ENCODE measurements at regions of chr1 and their contacts with region 1.

Region 1: GRCh38 chr1:89632657-89633247 is at the start of gene LRRC8C:
- DNase-seq: peak; percentile 75 to 95 (median 86)
- ATAC-seq: peak; percentile 77
- H3K4me3 ChIP-seq: peak within 1 kb of the TSS; percentile 95
- H3K4me3 Mint-ChIP-seq: peak within 1 kb of the TSS; percentile 99
- H3K27ac ChIP-seq: peak within 1 kb of the TSS; percentile 92 to 94
- H3K27ac Mint-ChIP-seq: peak within 1 kb of the TSS; percentile 98
- H3K4me1 ChIP-seq: peaks cover 41% of the 10 kb centered on the region
- H3K4me1 Mint-ChIP-seq: peaks cover 89% of the 10 kb centered on the region
- H3K27me3 ChIP-seq: no peaks in the 10 kb centered on the region
- H3K27me3 Mint-ChIP-seq: no peaks in the 10 kb centered on the region
- CTCF ChIP-seq: no peak
- total RNA-seq, gene LRRC8C: 28.4 to 30.2 TPM

Region 2: DNA sequence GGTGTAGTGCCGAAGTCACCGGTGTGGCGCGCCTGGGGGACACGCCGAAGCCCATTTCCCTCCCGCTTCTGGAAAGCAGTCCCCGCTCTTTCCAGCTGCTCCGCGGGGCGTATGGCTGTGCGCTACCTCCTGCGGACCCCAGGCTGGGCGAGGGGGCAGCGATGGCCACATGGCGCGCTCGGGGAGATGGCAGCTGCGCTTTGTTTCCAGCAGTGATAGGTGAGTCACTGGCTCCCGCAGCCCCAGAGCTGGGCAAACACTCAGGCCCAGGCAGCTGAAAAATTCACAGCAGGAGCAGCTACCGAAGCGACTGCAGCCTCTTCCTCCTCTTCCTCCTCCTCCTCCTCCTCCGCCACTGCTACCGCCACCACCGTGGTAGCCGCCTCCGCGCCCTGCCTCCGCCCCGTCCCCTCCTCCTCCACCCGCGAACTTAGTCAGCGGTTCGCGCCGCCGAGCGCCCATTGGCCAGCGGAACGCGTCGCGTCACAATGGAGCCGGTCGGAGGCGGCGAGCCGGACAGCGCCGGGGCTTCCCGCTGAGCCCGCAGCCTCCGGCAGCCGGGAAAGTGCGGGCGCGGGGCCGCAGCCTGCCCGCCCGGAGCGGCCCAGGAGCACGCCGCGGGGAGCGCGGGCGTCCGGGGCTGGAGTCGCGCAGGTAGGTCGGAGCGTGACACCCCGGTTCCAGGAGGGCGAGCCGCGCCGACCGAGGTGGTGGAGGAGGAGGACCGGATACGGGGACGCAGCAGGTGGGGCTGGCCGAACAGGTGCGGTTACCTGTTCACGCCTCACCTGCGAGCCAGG is 108.2 kb before region 1 on chr1 and contains the start of gene LRRC8B:
- CTCF ChIA-PET with region 1: no interaction called
- POLR2A ChIA-PET with region 1: interaction called, 17 read pairs
- intact Hi-C with region 1: no loop called
- DNase-seq: peak; percentile 74 to 95 (median 86)
- ATAC-seq: peak; percentile 79
- H3K4me3 ChIP-seq: peak within 1 kb of the TSS; percentile 97
- H3K4me3 Mint-ChIP-seq: no peak within 1 kb of the TSS
- H3K27ac ChIP-seq: peak within 1 kb of the TSS; percentile 90 to 91
- H3K27ac Mint-ChIP-seq: no peak within 1 kb of the TSS
- H3K4me1 ChIP-seq: peaks cover 23% of the 10 kb centered on the region
- H3K4me1 Mint-ChIP-seq: peaks cover 18% of the 10 kb centered on the region
- H3K27me3 ChIP-seq: no peaks in the 10 kb centered on the region
- H3K27me3 Mint-ChIP-seq: no peaks in the 10 kb centered on the region
- CTCF ChIP-seq: no peak
- total RNA-seq, gene LRRC8B: 15.4 to 16.8 TPM

Region 3: GRCh38 chr1:89566761-89567174 is 66.0 kb before region 1 on chr1:
- CTCF ChIA-PET with region 1: no interaction called
- POLR2A ChIA-PET with region 1: no interaction called
- intact Hi-C with region 1: no loop called
- DNase-seq: no peak
- ATAC-seq: no peak
- H3K4me3 ChIP-seq: no peak overlapping the region
- H3K4me3 Mint-ChIP-seq: no peak overlapping the region
- H3K27ac ChIP-seq: no peak overlapping the region
- H3K27ac Mint-ChIP-seq: no peak overlapping the region
- H3K4me1 ChIP-seq: no peaks in the 10 kb centered on the region
- H3K4me1 Mint-ChIP-seq: peaks cover 60% of the 10 kb centered on the region
- H3K27me3 ChIP-seq: no peaks in the 10 kb centered on the region
- H3K27me3 Mint-ChIP-seq: no peaks in the 10 kb centered on the region
- CTCF ChIP-seq: no peak

Region 4: GRCh38 chr1:89615676-89616598 is 16.8 kb before region 1 on chr1:
- CTCF ChIA-PET with region 1: interaction called, 84 read pairs
- POLR2A ChIA-PET with region 1: interaction called, 683 read pairs
- intact Hi-C with region 1: no loop called
- DNase-seq: peak in 3 of 14 experiments; percentile 48 to 66 (median 56)
- ATAC-seq: no peak
- H3K4me3 ChIP-seq: no peak overlapping the region
- H3K4me3 Mint-ChIP-seq: no peak overlapping the region
- H3K27ac ChIP-seq: no peak overlapping the region
- H3K27ac Mint-ChIP-seq: peak overlapping the region; percentile 99
- H3K4me1 ChIP-seq: peaks cover 42% of the 10 kb centered on the region
- H3K4me1 Mint-ChIP-seq: peaks cover 90% of the 10 kb centered on the region
- H3K27me3 ChIP-seq: no peaks in the 10 kb centered on the region
- H3K27me3 Mint-ChIP-seq: no peaks in the 10 kb centered on the region
- CTCF ChIP-seq: peak; percentile 17

Region 5: DNA sequence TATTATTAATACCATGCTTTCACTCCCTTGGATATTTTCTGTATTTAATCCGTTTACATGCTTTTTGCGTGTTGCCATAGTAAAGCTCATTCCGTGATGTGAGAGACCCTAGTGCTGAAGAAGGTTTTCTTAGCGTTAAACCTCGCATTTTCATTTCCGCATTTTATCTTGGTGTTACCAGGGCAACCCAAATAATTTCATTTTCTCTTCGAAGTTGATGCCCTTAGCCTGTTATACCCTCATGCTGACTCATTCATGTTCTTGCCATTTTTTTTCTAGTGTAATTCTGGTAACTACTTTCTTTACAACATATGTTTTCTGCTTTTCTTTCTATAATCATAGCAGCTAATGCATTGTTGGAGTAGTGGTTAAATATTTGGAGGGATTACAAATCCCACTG is 37.4 kb after region 1 on chr1:
- CTCF ChIA-PET with region 1: interaction called, 7 read pairs
- POLR2A ChIA-PET with region 1: interaction called, 6 read pairs
- intact Hi-C with region 1: loop called in 1 of 2 experiments (anchors 5 kb)
- DNase-seq: peak in 3 of 14 experiments; percentile 79 to 84 (median 81)
- ATAC-seq: peak; percentile 86
- H3K4me3 ChIP-seq: no peak overlapping the region
- H3K4me3 Mint-ChIP-seq: peak overlapping the region; percentile 62
- H3K27ac ChIP-seq: no peak overlapping the region
- H3K27ac Mint-ChIP-seq: peak overlapping the region; percentile 45
- H3K4me1 ChIP-seq: peaks cover 39% of the 10 kb centered on the region
- H3K4me1 Mint-ChIP-seq: peaks cover 98% of the 10 kb centered on the region
- H3K27me3 ChIP-seq: no peaks in the 10 kb centered on the region
- H3K27me3 Mint-ChIP-seq: no peaks in the 10 kb centered on the region
- CTCF ChIP-seq: no peak

Region 6: DNA sequence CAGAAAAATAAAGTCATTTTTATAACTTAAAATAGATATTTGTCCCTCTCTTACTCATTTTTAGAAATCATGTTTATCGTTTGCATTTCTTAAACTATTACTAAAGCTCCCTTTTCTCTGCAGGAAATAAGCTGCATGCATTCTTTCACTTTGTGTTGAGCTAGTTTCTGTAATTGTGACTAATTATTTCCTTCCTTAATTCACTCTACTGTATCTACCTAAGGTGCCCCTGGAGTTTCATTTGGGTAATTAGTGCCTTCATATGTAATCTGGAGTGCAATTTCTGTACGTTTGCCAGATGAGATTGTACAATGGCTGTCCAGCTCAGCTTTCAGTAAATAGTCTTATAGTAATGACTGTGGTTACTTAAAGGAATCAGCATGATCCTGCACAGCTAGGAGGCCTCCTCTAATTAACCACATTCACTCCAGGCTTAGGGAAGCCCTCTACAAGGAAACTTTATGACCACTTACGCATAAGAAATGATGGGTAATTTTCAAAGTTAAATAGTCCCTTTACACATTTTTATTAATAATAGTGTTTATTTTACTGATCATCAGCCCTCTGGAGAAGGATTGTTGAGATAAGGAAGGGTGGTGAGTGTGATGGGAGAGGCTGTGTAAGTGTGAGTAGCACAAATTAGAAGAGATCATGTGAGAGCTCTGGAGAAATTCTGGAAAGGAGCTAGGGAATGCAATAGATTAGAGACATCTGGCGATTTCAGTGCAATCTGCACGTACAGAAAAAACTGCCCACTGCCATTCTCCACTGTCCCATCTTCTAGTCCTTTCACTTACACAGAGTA is 87.0 kb after region 1 on chr1:
- CTCF ChIA-PET with region 1: interaction called, 6 read pairs
- POLR2A ChIA-PET with region 1: interaction called, 11 read pairs
- intact Hi-C with region 1: no loop called
- DNase-seq: peak in 3 of 14 experiments; percentile 59 to 80 (median 60)
- ATAC-seq: peak; percentile 80
- H3K4me3 ChIP-seq: no peak overlapping the region
- H3K4me3 Mint-ChIP-seq: peak overlapping the region; percentile 64
- H3K27ac ChIP-seq: peak overlapping the region in 1 of 2 donors; percentile 25
- H3K27ac Mint-ChIP-seq: peak overlapping the region; percentile 72
- H3K4me1 ChIP-seq: peaks cover 19% of the 10 kb centered on the region
- H3K4me1 Mint-ChIP-seq: peaks cover 78% of the 10 kb centered on the region
- H3K27me3 ChIP-seq: no peaks in the 10 kb centered on the region
- H3K27me3 Mint-ChIP-seq: no peaks in the 10 kb centered on the region
- CTCF ChIP-seq: no peak

Region 7: DNA sequence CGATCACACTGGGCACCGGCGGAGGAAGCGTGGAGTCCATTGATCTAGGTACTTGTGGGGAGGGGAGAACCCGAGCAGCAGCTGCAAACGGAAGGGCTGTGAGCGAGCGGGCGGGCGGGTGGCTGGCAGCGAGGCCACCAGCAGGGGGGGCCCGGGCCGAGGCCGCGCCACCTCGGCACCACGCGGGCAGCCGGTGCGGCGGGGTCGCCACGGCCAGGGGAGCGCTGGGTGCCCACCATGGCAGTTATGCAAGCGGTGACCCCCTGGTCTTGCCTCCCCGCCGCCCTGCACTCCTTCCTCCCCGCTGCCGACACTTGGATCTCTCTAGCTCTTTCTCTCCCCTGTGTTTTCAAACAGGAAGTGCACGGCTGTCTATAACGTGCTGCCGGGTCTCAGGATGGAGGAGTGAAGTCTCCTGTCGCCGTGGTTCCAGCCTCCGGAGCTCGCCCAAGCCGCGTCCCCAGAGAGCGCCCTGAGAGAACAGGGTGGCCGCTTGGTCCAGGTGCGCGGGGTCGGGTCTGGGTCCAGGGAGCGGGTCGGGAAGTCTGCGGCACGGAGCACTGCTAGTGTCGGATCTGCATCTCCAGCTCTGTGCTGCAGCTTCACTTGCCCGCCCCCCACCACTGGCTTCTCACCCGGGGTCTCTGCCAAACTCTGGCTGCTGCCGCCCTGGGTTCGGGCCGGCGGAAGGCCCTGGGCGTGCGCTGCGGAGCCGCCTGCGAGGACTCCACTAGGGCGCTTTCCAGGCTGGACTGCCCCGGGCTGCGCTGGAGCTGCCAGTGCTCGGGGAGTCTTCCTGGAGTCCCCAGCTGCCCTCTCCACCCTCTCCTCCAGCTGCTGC is 210.7 kb after region 1 on chr1:
- CTCF ChIA-PET with region 1: no interaction called
- POLR2A ChIA-PET with region 1: interaction called, 5 read pairs
- intact Hi-C with region 1: loop called in 1 of 2 experiments (anchors 5 kb)
- DNase-seq: peak; percentile 65 to 91 (median 72)
- ATAC-seq: peak; percentile 74
- H3K4me3 ChIP-seq: peak overlapping the region; percentile 75
- H3K4me3 Mint-ChIP-seq: peak overlapping the region; percentile 95
- H3K27ac ChIP-seq: peak overlapping the region; percentile 81 to 90
- H3K27ac Mint-ChIP-seq: peak overlapping the region; percentile 95
- H3K4me1 ChIP-seq: peaks cover 36% of the 10 kb centered on the region
- H3K4me1 Mint-ChIP-seq: peaks cover 54% of the 10 kb centered on the region
- H3K27me3 ChIP-seq: no peaks in the 10 kb centered on the region
- H3K27me3 Mint-ChIP-seq: no peaks in the 10 kb centered on the region
- CTCF ChIP-seq: peak; percentile 60